PC-3 (cell line): ENCODE measurements at regions of chr6 and their contacts with region 1.

Region 1: GRCh38 chr6:14001329-14002012 is 76.7 kb downstream of the RNF182 start:
- DNase-seq: peak; percentile 99
- ATAC-seq: peak; percentile 87
- H3K4me3 ChIP-seq: peak overlapping the region; percentile 51
- H3K27ac ChIP-seq: peak overlapping the region; percentile 96
- H3K4me1 ChIP-seq: peaks cover 29% of the 10 kb centered on the region
- H3K27me3 ChIP-seq: no peaks in the 10 kb centered on the region
- CTCF ChIP-seq: no peak

Region 2: GRCh38 chr6:13953061-13953705 is 48.3 kb before region 1 on chr6:
- CTCF ChIA-PET with region 1: no interaction called
- POLR2A ChIA-PET with region 1: no interaction called
- intact Hi-C with region 1: loop called (anchors 1 kb)
- DNase-seq: peak; percentile 97
- ATAC-seq: peak; percentile 91
- H3K4me3 ChIP-seq: peak overlapping the region; percentile 21; the same call in 1 of the 2 replicates
- H3K27ac ChIP-seq: peak overlapping the region; percentile 77
- H3K4me1 ChIP-seq: peaks cover 34% of the 10 kb centered on the region
- H3K27me3 ChIP-seq: no peaks in the 10 kb centered on the region
- CTCF ChIP-seq: no peak

Region 3: DNA sequence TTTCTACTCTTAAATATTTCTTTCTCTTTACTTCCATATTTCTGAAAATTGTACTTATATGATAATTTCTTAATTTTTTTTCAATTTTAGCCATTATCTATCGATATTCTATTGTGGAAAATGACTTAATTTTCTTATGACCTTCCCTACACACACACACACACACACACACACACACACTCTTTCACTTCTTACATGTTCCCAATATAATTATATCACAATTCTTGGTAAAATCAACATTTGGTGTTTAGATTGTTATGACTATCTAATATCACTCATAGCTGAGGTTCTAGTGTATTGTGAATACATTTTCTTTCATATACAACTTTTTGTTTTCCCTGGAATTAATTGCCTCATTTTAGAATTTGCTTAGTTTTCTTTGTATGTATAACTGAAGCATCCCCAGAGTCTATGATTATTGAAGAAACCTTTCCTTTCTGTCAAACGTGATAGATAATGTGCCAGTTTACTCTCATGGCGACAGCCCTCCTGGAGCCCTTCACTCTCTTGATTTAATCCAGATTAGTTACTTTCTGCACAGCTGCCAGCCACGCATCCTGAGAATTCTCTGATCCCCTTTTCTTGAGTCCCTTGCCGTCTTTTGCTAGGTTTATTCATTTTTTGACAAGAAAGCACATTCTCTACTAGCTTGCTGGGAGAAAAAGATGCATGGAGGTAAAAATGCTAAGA is 13.3 kb before region 1 on chr6:
- CTCF ChIA-PET with region 1: no interaction called
- POLR2A ChIA-PET with region 1: interaction called, 16 read pairs
- intact Hi-C with region 1: no loop called
- DNase-seq: no peak
- ATAC-seq: no peak
- H3K4me3 ChIP-seq: no peak overlapping the region
- H3K27ac ChIP-seq: no peak overlapping the region
- H3K4me1 ChIP-seq: peaks cover 34% of the 10 kb centered on the region
- H3K27me3 ChIP-seq: no peaks in the 10 kb centered on the region
- CTCF ChIP-seq: no peak

Region 4: GRCh38 chr6:14059791-14060444 is 58.4 kb after region 1 on chr6:
- CTCF ChIA-PET with region 1: no interaction called
- POLR2A ChIA-PET with region 1: interaction called, 4 read pairs
- intact Hi-C with region 1: loop called (anchors 1 kb)
- DNase-seq: peak; percentile 97
- ATAC-seq: peak; percentile 53
- H3K4me3 ChIP-seq: peak overlapping the region; percentile 8; the same call in 1 of the 2 replicates
- H3K27ac ChIP-seq: peak overlapping the region; percentile 91
- H3K4me1 ChIP-seq: peaks cover 57% of the 10 kb centered on the region
- H3K27me3 ChIP-seq: no peaks in the 10 kb centered on the region
- CTCF ChIP-seq: no peak